ENCODE measurements at regions of chr4 and their contacts with region 1.

Region 1: GRCh38 chr4:6909073-6909965 is at the start of gene TBC1D14:
- DNase-seq: peak; percentile 89
- H3K4me3 Mint-ChIP-seq: peak within 1 kb of the TSS; percentile 94
- H3K27ac Mint-ChIP-seq: peak within 1 kb of the TSS; percentile 89
- H3K4me1 Mint-ChIP-seq: peaks cover 54% of the 10 kb centered on the region
- H3K27me3 Mint-ChIP-seq: no peaks in the 10 kb centered on the region
- total RNA-seq, gene TBC1D14: 37.1 to 37.3 TPM

Region 2: GRCh38 chr4:6716018-6716911 is 193.1 kb before region 1 on chr4 and contains the start of gene BLOC1S4:
- CTCF ChIA-PET with region 1: interaction called, 10 read pairs
- POLR2A ChIA-PET with region 1: no interaction called
- intact Hi-C with region 1: no loop called
- DNase-seq: peak; percentile 92
- H3K4me3 Mint-ChIP-seq: peak within 1 kb of the TSS; percentile 90
- H3K27ac Mint-ChIP-seq: peak within 1 kb of the TSS; percentile 97
- H3K4me1 Mint-ChIP-seq: peaks cover 27% of the 10 kb centered on the region
- H3K27me3 Mint-ChIP-seq: peaks cover 3% of the 10 kb centered on the region
- total RNA-seq, gene BLOC1S4: 17.0 to 19.7 TPM

Region 3: GRCh38 chr4:6783053-6783981 is 126.0 kb before region 1 on chr4:
- CTCF ChIA-PET with region 1: interaction called, 6 read pairs
- POLR2A ChIA-PET with region 1: interaction called, 9 read pairs
- intact Hi-C with region 1: loop called (anchors 2 kb)
- DNase-seq: peak; percentile 94
- H3K4me3 Mint-ChIP-seq: peak overlapping the region; percentile 80
- H3K27ac Mint-ChIP-seq: peak overlapping the region; percentile 77
- H3K4me1 Mint-ChIP-seq: peaks cover 47% of the 10 kb centered on the region
- H3K27me3 Mint-ChIP-seq: no peaks in the 10 kb centered on the region

Region 4: GRCh38 chr4:6820695-6821094 is 88.6 kb before region 1 on chr4:
- CTCF ChIA-PET with region 1: no interaction called
- POLR2A ChIA-PET with region 1: no interaction called
- intact Hi-C with region 1: no loop called
- DNase-seq: no peak
- H3K4me3 Mint-ChIP-seq: no peak overlapping the region
- H3K27ac Mint-ChIP-seq: no peak overlapping the region
- H3K4me1 Mint-ChIP-seq: peaks cover 13% of the 10 kb centered on the region
- H3K27me3 Mint-ChIP-seq: no peaks in the 10 kb centered on the region

Region 5: DNA sequence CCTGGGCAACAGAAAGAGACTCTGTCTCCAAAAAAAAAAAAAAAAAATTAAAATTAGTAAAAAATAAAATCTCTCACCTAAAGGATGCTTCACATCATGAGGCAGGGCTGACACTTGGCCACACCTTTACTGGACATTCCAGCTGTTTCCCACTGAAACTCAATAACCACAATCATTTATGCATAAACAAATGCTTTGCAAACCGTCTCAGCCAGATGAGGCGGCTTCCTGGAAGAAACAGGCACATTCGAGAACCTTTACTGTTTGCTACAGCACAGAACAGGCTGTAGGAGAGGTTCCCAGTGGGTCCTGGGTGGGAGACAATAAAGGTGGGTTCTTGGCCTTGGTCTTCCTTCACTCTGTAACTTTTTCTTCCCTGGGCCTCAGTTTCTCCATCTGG is 10.6 kb before region 1 on chr4:
- CTCF ChIA-PET with region 1: interaction called, 13 read pairs
- POLR2A ChIA-PET with region 1: interaction called, 26 read pairs
- intact Hi-C with region 1: no loop called
- DNase-seq: no peak
- H3K4me3 Mint-ChIP-seq: no peak overlapping the region
- H3K27ac Mint-ChIP-seq: peak overlapping the region; percentile 82
- H3K4me1 Mint-ChIP-seq: peaks cover 29% of the 10 kb centered on the region
- H3K27me3 Mint-ChIP-seq: no peaks in the 10 kb centered on the region

Region 6: GRCh38 chr4:6926681-6927478 is 17.6 kb after region 1 on chr4:
- CTCF ChIA-PET with region 1: interaction called, 5 read pairs
- POLR2A ChIA-PET with region 1: interaction called, 10 read pairs
- intact Hi-C with region 1: no loop called
- DNase-seq: peak; percentile 76
- H3K4me3 Mint-ChIP-seq: peak overlapping the region; percentile 57
- H3K27ac Mint-ChIP-seq: peak overlapping the region; percentile 88
- H3K4me1 Mint-ChIP-seq: peaks cover 66% of the 10 kb centered on the region
- H3K27me3 Mint-ChIP-seq: no peaks in the 10 kb centered on the region

Region 7: DNA sequence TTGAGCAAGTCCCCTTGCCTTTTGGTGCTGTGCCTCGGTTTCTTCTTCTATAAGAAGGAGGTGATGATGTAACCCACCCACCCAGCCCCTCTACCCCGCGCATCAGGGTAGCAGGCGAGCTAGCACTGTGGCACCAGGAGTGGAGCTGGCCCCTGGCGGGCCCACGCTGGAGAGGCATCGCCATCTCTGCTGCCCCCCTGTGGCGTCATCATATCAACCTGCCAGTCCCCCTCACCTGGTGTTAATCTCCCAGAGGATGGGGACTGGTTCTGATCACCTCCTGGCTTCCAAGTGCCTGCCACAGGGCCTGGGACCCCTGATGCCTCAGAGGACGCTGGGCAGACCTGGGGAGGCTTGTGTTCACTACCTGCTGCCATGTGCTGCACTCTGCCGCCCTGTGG is 276.7 kb after region 1 on chr4:
- CTCF ChIA-PET with region 1: no interaction called
- POLR2A ChIA-PET with region 1: no interaction called
- intact Hi-C with region 1: loop called (anchors 10 kb)
- DNase-seq: peak; percentile 46
- H3K4me3 Mint-ChIP-seq: no peak overlapping the region
- H3K27ac Mint-ChIP-seq: no peak overlapping the region
- H3K4me1 Mint-ChIP-seq: peaks cover 12% of the 10 kb centered on the region
- H3K27me3 Mint-ChIP-seq: peaks cover 29% of the 10 kb centered on the region